GM13976 (cell line): ENCODE measurements at regions of chr7 and their contacts with region 1.

Region 1: GRCh38 chr7:134613623-134614347 is 32.9 kb upstream of the BPGM start:
- DNase-seq: no peak
- CTCF ChIP-seq: no peak

Region 2: DNA sequence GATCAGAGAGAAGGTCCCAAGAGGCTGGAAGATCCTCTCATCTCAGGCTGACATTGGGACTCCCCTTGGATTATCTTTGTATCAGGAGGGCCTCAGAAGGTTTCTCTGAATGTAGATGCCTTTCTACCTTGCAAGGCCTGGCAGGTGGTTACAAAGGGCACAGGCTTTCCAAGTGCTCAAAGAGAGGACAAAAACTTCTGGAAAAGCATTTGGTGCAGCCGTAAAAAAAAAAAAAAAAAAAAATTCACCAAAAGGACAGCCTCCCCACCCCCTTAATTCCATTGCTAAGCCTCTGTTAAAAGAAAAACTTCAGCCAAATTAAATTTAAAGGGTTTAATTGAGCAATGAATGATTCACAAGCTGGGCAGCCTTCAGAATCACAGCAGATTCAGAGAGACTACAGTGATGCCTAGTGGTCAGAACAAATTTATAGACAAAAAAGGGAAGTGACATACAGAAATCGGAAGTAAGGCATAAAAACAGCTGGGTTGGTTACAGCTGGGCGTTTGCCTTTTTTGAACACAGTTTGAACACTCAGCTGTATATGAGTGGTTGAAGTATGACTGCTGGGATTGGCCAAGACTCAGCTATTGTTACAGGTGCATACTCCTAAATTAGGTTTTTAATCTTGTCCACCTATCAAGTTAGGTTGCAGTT is 529.2 kb before region 1 on chr7:
- in situ Hi-C with region 1: no loop called
- DNase-seq: no peak
- CTCF ChIP-seq: no peak

Region 3: GRCh38 chr7:134943764-134944400 is 330.1 kb after region 1 on chr7:
- in situ Hi-C with region 1: loop called (anchors 10 kb)
- DNase-seq: peak; percentile 59
- CTCF ChIP-seq: peak; percentile 30